ENCODE measurements at regions of chr5 and their contacts with region 1.

Region 1: GRCh38 chr5:113378959-113379541 is 55.7 kb downstream of the TSSK1B start:
- DNase-seq: peak; percentile 56
- ATAC-seq: peak; percentile 67
- H3K4me3 ChIP-seq: no peak overlapping the region
- H3K4me3 Mint-ChIP-seq: no peak overlapping the region
- H3K27ac ChIP-seq: no peak overlapping the region
- H3K27ac Mint-ChIP-seq: no peak overlapping the region
- H3K4me1 ChIP-seq: peaks cover 11 to 13% of the 10 kb centered on the region in 2 donors
- H3K4me1 Mint-ChIP-seq: peaks cover 9% of the 10 kb centered on the region
- H3K27me3 ChIP-seq: peaks cover 0 to 9% (median 3%) of the 10 kb centered on the region in 4 experiments
- H3K27me3 Mint-ChIP-seq: peaks cover 32% of the 10 kb centered on the region
- CTCF ChIP-seq: peak; percentile 84

Region 2: GRCh38 chr5:112995764-112996618 is 383.1 kb before region 1 on chr5:
- CTCF ChIA-PET with region 1: interaction called, 13 read pairs
- POLR2A ChIA-PET with region 1: no interaction called
- intact Hi-C with region 1: loop called (anchors 5 kb)
- DNase-seq: peak; percentile 76
- ATAC-seq: peak; percentile 72
- H3K4me3 ChIP-seq: no peak overlapping the region
- H3K4me3 Mint-ChIP-seq: no peak overlapping the region
- H3K27ac ChIP-seq: no peak overlapping the region
- H3K27ac Mint-ChIP-seq: no peak overlapping the region
- H3K4me1 ChIP-seq: peaks cover 0 to 4% of the 10 kb centered on the region in 2 donors
- H3K4me1 Mint-ChIP-seq: peaks cover 17% of the 10 kb centered on the region
- H3K27me3 ChIP-seq: no peaks in the 10 kb centered on the region
- H3K27me3 Mint-ChIP-seq: no peaks in the 10 kb centered on the region
- CTCF ChIP-seq: peak; percentile 98

Region 3: DNA sequence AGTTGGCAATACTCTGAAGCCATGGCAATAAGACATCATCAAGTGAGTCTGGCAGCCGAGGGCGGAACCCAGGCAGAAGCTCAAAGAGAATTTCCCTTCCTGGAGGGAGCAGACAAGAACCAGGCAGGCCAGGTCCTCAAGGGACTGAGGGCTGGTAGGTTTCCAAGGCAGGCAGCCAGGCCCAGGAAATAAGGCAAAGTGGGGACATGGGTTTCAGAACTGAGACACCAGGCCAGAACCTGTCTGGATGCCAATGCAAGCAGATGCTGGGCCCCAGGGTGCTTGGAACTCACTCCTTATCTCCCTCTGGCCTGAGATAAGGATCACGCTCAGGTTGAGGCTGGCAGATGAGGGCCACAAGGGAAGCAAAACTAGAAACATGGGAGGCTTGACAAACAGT is 46.9 kb after region 1 on chr5:
- CTCF ChIA-PET with region 1: no interaction called
- POLR2A ChIA-PET with region 1: no interaction called
- intact Hi-C with region 1: no loop called
- DNase-seq: no peak
- ATAC-seq: no peak
- H3K4me3 ChIP-seq: no peak overlapping the region
- H3K4me3 Mint-ChIP-seq: no peak overlapping the region
- H3K27ac ChIP-seq: no peak overlapping the region
- H3K27ac Mint-ChIP-seq: no peak overlapping the region
- H3K4me1 ChIP-seq: no peaks in the 10 kb centered on the region
- H3K4me1 Mint-ChIP-seq: no peaks in the 10 kb centered on the region
- H3K27me3 ChIP-seq: peaks cover 0 to 4% (median 0%) of the 10 kb centered on the region in 4 experiments
- H3K27me3 Mint-ChIP-seq: peaks cover 15% of the 10 kb centered on the region
- CTCF ChIP-seq: no peak

Region 4: GRCh38 chr5:113513384-113514288 is 134.6 kb after region 1 on chr5 and contains the start of gene YTHDC2:
- CTCF ChIA-PET with region 1: interaction called, 10 read pairs
- POLR2A ChIA-PET with region 1: no interaction called
- intact Hi-C with region 1: loop called (anchors 1 kb)
- DNase-seq: peak; percentile 93
- ATAC-seq: peak; percentile 97
- H3K4me3 ChIP-seq: peak within 1 kb of the TSS; percentile 59 to 93 (median 84)
- H3K4me3 Mint-ChIP-seq: peak within 1 kb of the TSS; percentile 99
- H3K27ac ChIP-seq: peak within 1 kb of the TSS; percentile 83 to 93
- H3K27ac Mint-ChIP-seq: peak within 1 kb of the TSS; percentile 95
- H3K4me1 ChIP-seq: peaks cover 7 to 17% of the 10 kb centered on the region in 2 donors
- H3K4me1 Mint-ChIP-seq: peaks cover 30% of the 10 kb centered on the region
- H3K27me3 ChIP-seq: peaks cover 0 to 8% (median 3%) of the 10 kb centered on the region in 4 experiments
- H3K27me3 Mint-ChIP-seq: peaks cover 18% of the 10 kb centered on the region
- CTCF ChIP-seq: peak; percentile 18
- total RNA-seq, gene YTHDC2: 52.6 and 62.4 TPM in 2 replicates

Region 5: GRCh38 chr5:113601423-113601822 is 222.4 kb after region 1 on chr5:
- CTCF ChIA-PET with region 1: interaction called, 22 read pairs
- POLR2A ChIA-PET with region 1: no interaction called
- intact Hi-C with region 1: no loop called
- DNase-seq: no peak
- ATAC-seq: no peak
- H3K4me3 ChIP-seq: no peak overlapping the region
- H3K4me3 Mint-ChIP-seq: no peak overlapping the region
- H3K27ac ChIP-seq: no peak overlapping the region
- H3K27ac Mint-ChIP-seq: no peak overlapping the region
- H3K4me1 ChIP-seq: peaks cover 0 to 3% of the 10 kb centered on the region in 2 donors
- H3K4me1 Mint-ChIP-seq: no peaks in the 10 kb centered on the region
- H3K27me3 ChIP-seq: peaks cover 0 to 14% (median 6%) of the 10 kb centered on the region in 4 experiments
- H3K27me3 Mint-ChIP-seq: peaks cover 14% of the 10 kb centered on the region
- CTCF ChIP-seq: no peak

Region 6: GRCh38 chr5:113606298-113607134 is 227.5 kb after region 1 on chr5:
- CTCF ChIA-PET with region 1: interaction called, 22 read pairs
- POLR2A ChIA-PET with region 1: no interaction called
- intact Hi-C with region 1: no loop called
- DNase-seq: peak; percentile 61
- ATAC-seq: peak; percentile 57
- H3K4me3 ChIP-seq: no peak overlapping the region
- H3K4me3 Mint-ChIP-seq: no peak overlapping the region
- H3K27ac ChIP-seq: no peak overlapping the region
- H3K27ac Mint-ChIP-seq: no peak overlapping the region
- H3K4me1 ChIP-seq: peaks cover 0 to 3% of the 10 kb centered on the region in 2 donors
- H3K4me1 Mint-ChIP-seq: no peaks in the 10 kb centered on the region
- H3K27me3 ChIP-seq: peaks cover 0 to 21% (median 11%) of the 10 kb centered on the region in 4 experiments
- H3K27me3 Mint-ChIP-seq: peaks cover 37% of the 10 kb centered on the region
- CTCF ChIP-seq: peak; percentile 85